ENCODE measurements at regions of chr16 and their contacts with region 1.

Region 1: GRCh38 chr16:84504420-84505248 is at the start of gene MEAK7:
- DNase-seq: peak; percentile 94 to 98 (median 97)
- H3K4me3 ChIP-seq: peak within 1 kb of the TSS; percentile 95
- H3K4me3 Mint-ChIP-seq: peak within 1 kb of the TSS; percentile 83 to 96 (median 88)
- H3K27ac ChIP-seq: peak within 1 kb of the TSS; percentile 73
- H3K27ac Mint-ChIP-seq: peak within 1 kb of the TSS; percentile 6 to 97 (median 87)
- H3K4me1 ChIP-seq: peaks cover 56% of the 10 kb centered on the region
- H3K4me1 Mint-ChIP-seq: peaks cover 40 to 62% (median 52%) of the 10 kb centered on the region in 3 donors
- H3K27me3 ChIP-seq: no peaks in the 10 kb centered on the region
- H3K27me3 Mint-ChIP-seq: no peaks in the 10 kb centered on the region
- total RNA-seq, gene MEAK7: 6.7 to 7.7 TPM

Region 2: DNA sequence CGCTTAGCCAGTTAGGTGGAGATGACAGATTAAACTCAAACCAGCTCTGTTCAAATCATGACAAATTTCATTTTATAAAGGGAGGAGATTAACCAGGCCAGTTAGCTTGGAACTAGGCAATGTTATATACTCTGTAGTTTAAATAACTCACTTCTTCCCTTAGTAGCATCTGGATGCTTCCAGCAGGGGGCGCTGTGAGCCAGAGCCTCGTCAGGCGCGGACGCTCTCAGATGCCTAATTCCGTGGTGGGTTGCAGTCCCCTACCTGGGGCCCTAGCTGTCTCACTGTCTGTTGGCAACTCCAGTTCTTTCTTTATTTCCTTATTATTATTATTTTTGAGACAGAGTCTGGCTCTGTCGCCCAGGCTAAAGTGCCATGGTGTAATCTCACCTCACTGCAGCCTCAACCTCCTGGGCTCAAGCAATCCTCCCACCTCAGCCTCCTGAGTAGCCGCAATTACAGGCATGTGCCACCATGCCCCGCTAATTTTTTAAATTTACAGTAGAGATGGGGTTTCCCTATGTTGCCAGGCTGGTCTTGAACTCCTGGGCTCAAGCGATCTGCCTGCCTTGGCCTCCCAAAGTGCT is 227.3 kb before region 1 on chr16:
- CTCF ChIA-PET with region 1: interaction called, 13 read pairs
- POLR2A ChIA-PET with region 1: no interaction called
- DNase-seq: peak; percentile 29 to 80 (median 50)
- H3K4me3 ChIP-seq: no peak overlapping the region
- H3K4me3 Mint-ChIP-seq: no peak overlapping the region
- H3K27ac ChIP-seq: no peak overlapping the region
- H3K27ac Mint-ChIP-seq: no peak overlapping the region
- H3K4me1 ChIP-seq: no peaks in the 10 kb centered on the region
- H3K4me1 Mint-ChIP-seq: peaks cover 0 to 1% (median 0%) of the 10 kb centered on the region in 3 donors
- H3K27me3 ChIP-seq: no peaks in the 10 kb centered on the region
- H3K27me3 Mint-ChIP-seq: peaks cover 9 to 17% of the 10 kb centered on the region in 2 donors

Region 3: GRCh38 chr16:84518748-84519341 is 14.2 kb after region 1 on chr16:
- CTCF ChIA-PET with region 1: interaction called, 21 read pairs
- POLR2A ChIA-PET with region 1: interaction called, 4 read pairs
- DNase-seq: peak; percentile 45 to 86 (median 64)
- H3K4me3 ChIP-seq: peak overlapping the region; percentile 38
- H3K4me3 Mint-ChIP-seq: peak overlapping the region; percentile 7 to 80 (median 64)
- H3K27ac ChIP-seq: no peak overlapping the region
- H3K27ac Mint-ChIP-seq: peak overlapping the region; percentile 66 to 87 (median 78)
- H3K4me1 ChIP-seq: peaks cover 63% of the 10 kb centered on the region
- H3K4me1 Mint-ChIP-seq: peaks cover 55 to 69% (median 69%) of the 10 kb centered on the region in 3 donors
- H3K27me3 ChIP-seq: no peaks in the 10 kb centered on the region
- H3K27me3 Mint-ChIP-seq: no peaks in the 10 kb centered on the region

Region 4: GRCh38 chr16:84599521-84600202 is 95.0 kb after region 1 on chr16:
- CTCF ChIA-PET with region 1: interaction called, 16 read pairs
- POLR2A ChIA-PET with region 1: interaction called, 3 read pairs
- DNase-seq: peak in 2 of 5 donors; percentile 58 to 79
- H3K4me3 ChIP-seq: peak overlapping the region; percentile 54
- H3K4me3 Mint-ChIP-seq: peak overlapping the region; percentile 75 to 91 (median 84)
- H3K27ac ChIP-seq: peak overlapping the region; percentile 86
- H3K27ac Mint-ChIP-seq: peak overlapping the region; percentile 92 to 100 (median 95)
- H3K4me1 ChIP-seq: peaks cover 90% of the 10 kb centered on the region
- H3K4me1 Mint-ChIP-seq: peaks cover 84 to 96% (median 95%) of the 10 kb centered on the region in 3 donors
- H3K27me3 ChIP-seq: no peaks in the 10 kb centered on the region
- H3K27me3 Mint-ChIP-seq: peaks cover 0 to 2% of the 10 kb centered on the region in 2 donors

Region 5: GRCh38 chr16:84699712-84700445 is 195.2 kb after region 1 on chr16 and contains the start of gene USP10:
- CTCF ChIA-PET with region 1: interaction called, 10 read pairs
- POLR2A ChIA-PET with region 1: no interaction called
- DNase-seq: peak; percentile 78 to 89 (median 85)
- H3K4me3 ChIP-seq: peak within 1 kb of the TSS; percentile 74
- H3K4me3 Mint-ChIP-seq: peak within 1 kb of the TSS; percentile 96 to 99 (median 98)
- H3K27ac ChIP-seq: peak within 1 kb of the TSS; percentile 73
- H3K27ac Mint-ChIP-seq: peak within 1 kb of the TSS; percentile 91 to 98 (median 96)
- H3K4me1 ChIP-seq: peaks cover 37% of the 10 kb centered on the region
- H3K4me1 Mint-ChIP-seq: peaks cover 41 to 51% (median 48%) of the 10 kb centered on the region in 3 donors
- H3K27me3 ChIP-seq: no peaks in the 10 kb centered on the region
- H3K27me3 Mint-ChIP-seq: peaks cover 0 to 2% of the 10 kb centered on the region in 2 donors
- total RNA-seq, gene USP10: 143 to 146 TPM

Region 6: DNA sequence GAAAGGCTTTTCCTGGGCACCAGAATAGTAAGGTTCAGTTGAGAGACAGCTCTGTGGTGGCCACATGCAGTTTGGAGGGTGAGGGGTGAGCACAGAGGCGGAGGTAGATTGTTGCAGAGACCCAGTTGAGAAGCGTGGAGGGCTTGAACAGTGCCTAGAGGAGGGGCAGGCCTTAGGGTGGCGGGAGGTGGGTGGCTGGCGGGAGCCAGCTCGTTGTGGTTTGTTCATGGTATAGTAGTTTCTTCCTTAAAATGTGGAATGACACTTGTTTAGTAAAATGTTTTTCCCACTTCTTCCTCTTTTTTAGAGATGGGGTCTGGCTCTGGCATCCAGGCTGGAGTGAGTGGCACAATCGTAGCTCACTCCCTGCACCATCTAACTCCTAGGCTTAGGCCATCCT is 209.4 kb after region 1 on chr16:
- CTCF ChIA-PET with region 1: interaction called, 11 read pairs
- POLR2A ChIA-PET with region 1: no interaction called
- DNase-seq: no peak
- H3K4me3 ChIP-seq: no peak overlapping the region
- H3K4me3 Mint-ChIP-seq: no peak overlapping the region
- H3K27ac ChIP-seq: no peak overlapping the region
- H3K27ac Mint-ChIP-seq: peak overlapping the region in 1 of 8 donors; percentile 1
- H3K4me1 ChIP-seq: peaks cover 36% of the 10 kb centered on the region
- H3K4me1 Mint-ChIP-seq: peaks cover 72 to 94% (median 87%) of the 10 kb centered on the region in 3 donors
- H3K27me3 ChIP-seq: no peaks in the 10 kb centered on the region
- H3K27me3 Mint-ChIP-seq: no peaks in the 10 kb centered on the region

Region 7: DNA sequence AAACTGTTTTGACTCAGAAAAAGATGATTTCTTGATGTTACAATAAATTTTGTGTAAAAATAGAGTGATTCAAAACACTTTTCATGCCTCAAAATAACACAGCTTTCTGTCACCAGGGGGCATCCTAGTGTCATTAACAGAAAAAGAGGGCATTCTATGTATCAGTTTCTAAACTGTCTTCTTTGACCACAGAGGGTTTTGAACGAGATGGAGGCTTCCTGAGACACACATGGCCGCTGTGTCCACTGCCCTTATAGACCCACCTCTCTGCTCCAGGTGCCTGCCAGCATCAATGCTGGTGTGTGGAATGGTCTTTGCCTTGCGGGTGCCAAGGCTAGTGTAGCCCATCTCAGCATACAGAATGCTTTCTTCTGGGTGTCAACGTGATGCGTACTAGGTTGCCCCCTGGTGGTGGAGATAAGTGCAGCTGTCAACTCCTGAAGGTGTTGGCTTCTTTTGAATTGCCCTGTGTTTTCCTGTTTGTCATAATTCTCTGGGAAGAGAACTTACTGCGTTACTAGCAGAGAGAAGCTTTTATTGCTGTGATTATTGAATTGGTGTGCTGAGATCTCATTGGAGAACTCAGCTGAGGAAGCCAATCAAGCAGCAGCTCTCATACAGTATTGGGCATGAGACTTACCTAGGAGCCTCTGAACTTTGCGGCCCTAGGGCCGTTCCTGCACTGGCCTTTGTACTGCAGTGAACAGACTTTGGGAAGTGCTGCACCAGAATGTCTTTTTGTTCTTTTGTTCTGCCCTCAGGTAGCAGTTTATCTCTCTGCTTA is 233.8 kb after region 1 on chr16:
- CTCF ChIA-PET with region 1: interaction called, 10 read pairs
- POLR2A ChIA-PET with region 1: no interaction called
- DNase-seq: peak; percentile 60 to 81 (median 67)
- H3K4me3 ChIP-seq: peak overlapping the region; percentile 44
- H3K4me3 Mint-ChIP-seq: peak overlapping the region in 6 of 7 donors; percentile 60 to 80 (median 75)
- H3K27ac ChIP-seq: no peak overlapping the region
- H3K27ac Mint-ChIP-seq: peak overlapping the region; percentile 1 to 89 (median 64)
- H3K4me1 ChIP-seq: peaks cover 26% of the 10 kb centered on the region
- H3K4me1 Mint-ChIP-seq: peaks cover 31 to 60% (median 51%) of the 10 kb centered on the region in 3 donors
- H3K27me3 ChIP-seq: no peaks in the 10 kb centered on the region
- H3K27me3 Mint-ChIP-seq: peaks cover 0 to 1% of the 10 kb centered on the region in 2 donors